ENCODE measurements at regions of chr13 and their contacts with region 1.

Region 1: GRCh38 chr13:50123862-50124536 is 108.8 kb downstream of the KCNRG start:
- DNase-seq: peak; percentile 84
- ATAC-seq: peak; percentile 62
- H3K4me3 ChIP-seq: peak overlapping the region; percentile 77 to 98 (median 98)
- H3K4me3 Mint-ChIP-seq: peak overlapping the region; percentile 92
- H3K27ac ChIP-seq: peak overlapping the region; percentile 73 to 98
- H3K27ac Mint-ChIP-seq: peak overlapping the region; percentile 96
- H3K4me1 ChIP-seq: peaks cover 50 to 54% of the 10 kb centered on the region in 2 donors
- H3K4me1 Mint-ChIP-seq: peaks cover 64% of the 10 kb centered on the region
- H3K27me3 ChIP-seq: peaks cover 0 to 12% (median 6%) of the 10 kb centered on the region in 4 experiments
- H3K27me3 Mint-ChIP-seq: peaks cover 7% of the 10 kb centered on the region
- CTCF ChIP-seq: no peak

Region 2: DNA sequence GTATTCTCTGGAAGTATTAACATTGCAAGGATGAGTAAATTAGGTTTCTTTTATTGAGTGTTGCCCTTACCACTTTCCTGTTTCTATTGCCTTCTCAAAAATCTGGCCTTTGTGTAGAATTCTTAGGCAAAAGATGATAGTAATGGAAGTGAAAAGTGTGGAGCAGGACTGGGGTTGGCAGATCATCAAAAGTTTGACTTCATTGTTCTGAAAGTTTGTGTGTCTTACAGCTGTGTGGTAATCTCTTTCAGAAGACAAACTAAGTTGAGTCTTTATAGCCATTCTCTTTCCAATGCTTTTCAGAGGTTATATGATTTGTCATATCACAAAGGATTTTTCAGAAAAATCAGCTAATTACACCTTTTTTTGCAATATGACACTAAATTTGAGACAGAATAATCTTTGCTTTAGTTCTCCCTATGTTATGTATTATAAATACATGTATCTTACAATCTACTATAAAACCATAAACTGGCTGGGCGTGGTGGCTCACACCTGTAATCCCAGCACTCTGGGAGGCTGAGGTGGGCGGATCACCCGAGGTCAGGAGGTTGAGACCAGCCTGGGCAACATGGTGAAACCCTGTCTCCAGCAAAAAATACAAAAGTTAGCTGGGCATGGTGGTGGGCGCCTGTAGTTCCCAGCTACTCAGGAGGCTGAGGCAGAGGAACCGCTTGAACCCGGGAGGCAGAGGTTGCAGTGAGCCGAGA is 117.4 kb before region 1 on chr13:
- CTCF ChIA-PET with region 1: no interaction called
- POLR2A ChIA-PET with region 1: no interaction called
- intact Hi-C with region 1: no loop called
- DNase-seq: no peak
- ATAC-seq: no peak
- H3K4me3 ChIP-seq: no peak overlapping the region
- H3K4me3 Mint-ChIP-seq: no peak overlapping the region
- H3K27ac ChIP-seq: peak overlapping the region in 1 of 2 donors; percentile 4
- H3K27ac Mint-ChIP-seq: peak overlapping the region; percentile 43
- H3K4me1 ChIP-seq: peaks cover 0 to 4% of the 10 kb centered on the region in 2 donors
- H3K4me1 Mint-ChIP-seq: peaks cover 29% of the 10 kb centered on the region
- H3K27me3 ChIP-seq: no peaks in the 10 kb centered on the region
- H3K27me3 Mint-ChIP-seq: no peaks in the 10 kb centered on the region
- CTCF ChIP-seq: no peak

Region 3: GRCh38 chr13:50106559-50106958 is 17.4 kb before region 1 on chr13:
- CTCF ChIA-PET with region 1: interaction called, 27 read pairs
- POLR2A ChIA-PET with region 1: interaction called, 10 read pairs
- intact Hi-C with region 1: loop called (anchors 2 kb)
- DNase-seq: peak; percentile 61
- ATAC-seq: peak; percentile 81
- H3K4me3 ChIP-seq: peak overlapping the region in 4 of 5 experiments; percentile 15 to 42 (median 26)
- H3K4me3 Mint-ChIP-seq: peak overlapping the region; percentile 77
- H3K27ac ChIP-seq: peak overlapping the region; percentile 59 to 89
- H3K27ac Mint-ChIP-seq: peak overlapping the region; percentile 92
- H3K4me1 ChIP-seq: peaks cover 49 to 68% of the 10 kb centered on the region in 2 donors
- H3K4me1 Mint-ChIP-seq: peaks cover 60% of the 10 kb centered on the region
- H3K27me3 ChIP-seq: no peaks in the 10 kb centered on the region
- H3K27me3 Mint-ChIP-seq: no peaks in the 10 kb centered on the region
- CTCF ChIP-seq: no peak

Region 4: GRCh38 chr13:50340551-50341287 is 216.7 kb after region 1 on chr13:
- CTCF ChIA-PET with region 1: no interaction called
- POLR2A ChIA-PET with region 1: no interaction called
- intact Hi-C with region 1: no loop called
- DNase-seq: no peak
- ATAC-seq: no peak
- H3K4me3 ChIP-seq: no peak overlapping the region
- H3K4me3 Mint-ChIP-seq: no peak overlapping the region
- H3K27ac ChIP-seq: no peak overlapping the region
- H3K27ac Mint-ChIP-seq: no peak overlapping the region
- H3K4me1 ChIP-seq: peaks cover 0 to 4% of the 10 kb centered on the region in 2 donors
- H3K4me1 Mint-ChIP-seq: peaks cover 3% of the 10 kb centered on the region
- H3K27me3 ChIP-seq: no peaks in the 10 kb centered on the region
- H3K27me3 Mint-ChIP-seq: no peaks in the 10 kb centered on the region
- CTCF ChIP-seq: no peak

Region 5: DNA sequence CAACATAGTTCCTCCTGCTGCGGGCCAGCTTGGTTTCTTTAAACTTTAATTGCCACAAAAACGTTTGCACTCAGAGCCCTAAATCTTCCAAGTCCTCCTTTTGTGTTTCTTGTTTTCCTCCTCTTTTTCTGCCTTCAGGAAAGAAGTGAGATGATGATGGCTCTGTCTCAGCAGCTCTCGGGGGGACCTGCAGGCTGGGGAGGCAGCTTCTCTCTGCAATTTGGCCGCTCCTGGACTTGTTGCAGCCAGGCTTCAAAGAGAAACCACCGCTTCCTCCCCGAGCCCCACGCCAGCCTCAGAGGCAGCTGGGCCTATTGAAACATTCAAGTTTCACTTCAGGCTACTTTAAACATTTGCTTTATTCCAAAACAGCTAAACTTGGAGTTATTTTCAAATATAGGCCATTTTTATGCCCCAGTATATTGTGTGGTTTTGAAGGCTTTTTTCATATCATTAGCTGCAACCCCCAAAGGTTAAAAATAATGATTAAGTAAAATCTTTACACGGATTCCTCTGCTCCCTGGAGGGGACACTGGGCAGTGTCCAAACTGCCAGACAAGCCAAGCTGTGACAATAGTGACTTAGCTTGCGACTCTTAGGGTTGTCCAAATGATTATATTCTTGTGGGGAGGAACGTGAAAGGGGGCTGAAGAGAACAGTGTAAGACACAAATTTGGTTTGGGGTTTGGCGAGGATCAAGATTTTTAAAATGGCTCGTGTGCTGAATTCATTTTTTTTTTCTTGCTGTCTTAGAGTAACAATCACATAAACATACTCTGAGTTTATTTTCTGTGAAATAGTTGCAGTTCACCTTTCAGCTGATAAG is 388.7 kb after region 1 on chr13:
- CTCF ChIA-PET with region 1: interaction called, 3 read pairs
- POLR2A ChIA-PET with region 1: interaction called, 11 read pairs
- intact Hi-C with region 1: loop called (anchors 5 kb)
- DNase-seq: peak; percentile 72
- ATAC-seq: peak; percentile 84
- H3K4me3 ChIP-seq: peak overlapping the region; percentile 25 to 71 (median 47)
- H3K4me3 Mint-ChIP-seq: no peak overlapping the region
- H3K27ac ChIP-seq: peak overlapping the region; percentile 76 to 92
- H3K27ac Mint-ChIP-seq: no peak overlapping the region
- H3K4me1 ChIP-seq: peaks cover 22 to 32% of the 10 kb centered on the region in 2 donors
- H3K4me1 Mint-ChIP-seq: no peaks in the 10 kb centered on the region
- H3K27me3 ChIP-seq: no peaks in the 10 kb centered on the region
- H3K27me3 Mint-ChIP-seq: no peaks in the 10 kb centered on the region
- CTCF ChIP-seq: no peak

Region 6: GRCh38 chr13:50635504-50635903 is 511.5 kb after region 1 on chr13:
- CTCF ChIA-PET with region 1: no interaction called
- POLR2A ChIA-PET with region 1: interaction called, 5 read pairs
- intact Hi-C with region 1: loop called (anchors 5 kb)
- DNase-seq: peak; percentile 90
- ATAC-seq: peak; percentile 79
- H3K4me3 ChIP-seq: no peak overlapping the region
- H3K4me3 Mint-ChIP-seq: peak overlapping the region; percentile 63
- H3K27ac ChIP-seq: peak overlapping the region; percentile 92 to 95
- H3K27ac Mint-ChIP-seq: peak overlapping the region; percentile 96
- H3K4me1 ChIP-seq: peaks cover 26 to 30% of the 10 kb centered on the region in 2 donors
- H3K4me1 Mint-ChIP-seq: peaks cover 44% of the 10 kb centered on the region
- H3K27me3 ChIP-seq: no peaks in the 10 kb centered on the region
- H3K27me3 Mint-ChIP-seq: no peaks in the 10 kb centered on the region
- CTCF ChIP-seq: no peak

Region 7: DNA sequence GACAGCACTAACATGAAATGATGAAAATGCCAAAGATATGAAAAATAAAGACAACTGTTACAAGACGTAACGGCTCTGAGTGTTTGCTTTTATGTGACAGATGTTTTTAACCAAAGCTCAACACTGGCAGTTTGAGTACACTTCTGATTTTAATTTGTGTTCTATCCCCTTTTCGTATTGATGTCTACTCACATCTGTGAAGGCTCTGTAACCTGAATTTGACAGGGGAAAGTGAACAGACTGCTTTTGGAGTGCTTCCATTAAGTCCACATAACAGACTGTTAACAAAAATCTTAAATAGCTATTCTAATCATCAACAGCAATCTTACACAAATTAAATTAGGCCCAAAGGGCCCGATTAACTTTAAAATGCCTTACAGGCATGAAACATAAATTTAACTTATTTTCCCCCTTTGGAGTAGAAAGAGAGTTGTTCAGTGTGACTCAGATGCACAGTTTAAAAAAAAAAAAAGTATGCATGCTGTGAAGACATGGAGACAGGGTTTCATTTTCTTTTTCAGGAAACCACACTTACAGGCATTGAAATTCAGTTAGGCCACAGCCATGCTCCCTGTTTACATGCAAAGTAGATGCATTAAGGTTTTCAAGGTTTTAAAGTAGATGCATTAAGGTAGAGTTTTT is 769.3 kb after region 1 on chr13:
- CTCF ChIA-PET with region 1: no interaction called
- POLR2A ChIA-PET with region 1: interaction called, 3 read pairs
- intact Hi-C with region 1: loop called (anchors 5 kb)
- DNase-seq: peak; percentile 64
- ATAC-seq: peak; percentile 83
- H3K4me3 ChIP-seq: peak overlapping the region in 4 of 5 experiments; percentile 11 to 55 (median 30)
- H3K4me3 Mint-ChIP-seq: peak overlapping the region; percentile 85
- H3K27ac ChIP-seq: peak overlapping the region; percentile 76 to 78
- H3K27ac Mint-ChIP-seq: peak overlapping the region; percentile 95
- H3K4me1 ChIP-seq: peaks cover 53 to 56% of the 10 kb centered on the region in 2 donors
- H3K4me1 Mint-ChIP-seq: peaks cover 57% of the 10 kb centered on the region
- H3K27me3 ChIP-seq: no peaks in the 10 kb centered on the region
- H3K27me3 Mint-ChIP-seq: no peaks in the 10 kb centered on the region
- CTCF ChIP-seq: no peak